ENCODE measurements at regions of chr7 and their contacts with region 1.

Region 1: DNA sequence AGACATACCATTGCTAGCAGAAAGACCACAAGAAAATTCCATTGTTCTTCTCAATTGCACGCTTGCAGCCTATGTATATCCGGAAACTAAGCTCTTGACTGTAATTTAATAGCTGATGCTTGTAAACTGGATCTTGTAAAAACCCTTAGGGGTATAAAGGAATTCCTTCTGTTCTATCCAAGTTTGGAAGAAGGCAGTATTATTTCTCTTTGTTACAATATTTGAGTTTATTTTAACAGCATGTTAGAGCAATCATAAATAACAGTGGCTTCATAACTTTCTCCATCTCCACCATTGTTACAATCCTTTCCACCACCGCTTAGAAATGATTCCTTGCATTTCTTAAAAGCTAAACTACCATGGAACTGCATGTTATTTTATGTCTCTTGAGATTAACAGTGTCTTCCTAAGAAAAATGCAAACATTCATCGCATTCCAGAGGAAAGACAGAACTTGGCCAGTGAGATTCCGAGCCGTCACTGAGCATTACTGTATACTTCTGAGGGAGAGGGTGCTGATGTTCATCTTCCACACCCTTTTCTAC is 92.5 kb downstream of the TRIL start:
- DNase-seq: no peak
- ATAC-seq: no peak
- H3K4me3 ChIP-seq: no peak overlapping the region
- H3K27ac ChIP-seq: no peak overlapping the region
- H3K4me1 ChIP-seq: no peaks in the 10 kb centered on the region
- H3K27me3 ChIP-seq: no peaks in the 10 kb centered on the region
- CTCF ChIP-seq: no peak

Region 2: DNA sequence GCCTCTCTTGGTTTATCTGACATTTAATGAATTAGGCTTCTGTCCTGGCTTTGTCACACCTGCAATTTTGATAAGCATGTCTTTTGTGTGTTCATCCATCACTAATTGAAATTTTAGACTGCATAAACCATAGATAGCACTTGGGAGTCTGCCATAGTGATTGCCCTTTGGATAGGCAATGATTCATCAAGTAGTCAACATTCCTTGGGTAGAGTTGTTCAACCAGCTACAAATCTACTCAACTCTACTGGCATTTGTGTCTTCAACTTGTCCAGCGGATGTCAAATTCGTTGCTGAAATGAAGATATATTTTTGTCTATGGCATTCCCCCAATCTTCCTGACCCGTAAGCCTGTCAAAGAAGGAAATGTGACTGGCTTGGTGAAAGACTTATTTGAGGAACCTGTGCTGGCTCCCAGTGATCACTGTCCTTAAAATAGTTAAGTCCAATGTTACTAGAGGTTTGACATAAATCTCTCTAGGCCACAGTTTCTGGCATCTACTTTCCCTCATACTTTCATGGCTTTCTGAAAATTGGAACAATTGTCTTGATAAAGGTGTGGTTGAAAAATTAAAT is 487.0 kb before region 1 on chr7:
- intact Hi-C with region 1: loop called in 2 of 3 experiments (anchors 10 kb)
- DNase-seq: no peak
- ATAC-seq: no peak
- H3K4me3 ChIP-seq: no peak overlapping the region
- H3K27ac ChIP-seq: no peak overlapping the region
- H3K4me1 ChIP-seq: no peaks in the 10 kb centered on the region
- H3K27me3 ChIP-seq: no peaks in the 10 kb centered on the region
- CTCF ChIP-seq: no peak

Region 3: DNA sequence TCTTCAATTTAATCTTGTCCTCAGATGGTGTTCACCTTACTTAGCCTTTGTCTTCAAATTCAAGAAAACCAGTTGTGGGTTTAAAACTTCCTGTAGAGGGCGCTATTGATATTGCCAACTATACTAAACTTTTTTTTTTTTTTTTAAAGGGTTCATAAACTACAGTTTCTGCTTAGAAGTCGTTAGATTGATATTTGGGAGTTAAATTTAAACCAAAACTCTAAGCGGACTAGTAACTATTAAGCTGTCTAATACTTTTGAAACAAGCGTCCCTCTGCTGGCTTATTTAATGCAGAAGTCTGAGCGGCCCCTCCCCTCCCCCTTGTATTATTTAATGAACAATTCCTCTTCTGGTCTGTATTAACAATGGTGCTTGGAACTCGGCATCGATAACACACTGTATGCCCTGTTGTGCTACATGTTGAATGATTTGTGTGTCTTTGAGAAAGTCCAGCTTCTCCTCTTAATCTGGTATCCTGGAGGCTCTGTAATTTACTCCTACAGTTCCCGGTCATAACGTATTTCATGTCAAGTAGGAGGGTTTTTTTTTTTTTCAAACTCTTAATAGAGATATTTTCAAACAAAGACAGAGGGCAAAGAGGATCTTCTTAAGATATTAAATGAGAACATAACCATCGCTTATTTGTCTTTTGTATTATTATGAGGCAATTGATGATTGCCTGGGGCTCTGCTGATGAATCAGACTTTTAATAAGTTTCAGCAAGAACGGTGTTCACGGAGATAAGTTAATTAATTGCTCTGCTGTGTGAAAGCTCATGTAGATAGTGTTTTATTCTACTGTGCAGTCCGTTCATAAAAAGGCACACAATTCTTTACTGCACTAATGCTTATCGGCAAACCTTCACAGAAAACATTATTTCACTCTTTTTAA is 475.9 kb before region 1 on chr7:
- intact Hi-C with region 1: loop called in 1 of 3 experiments (anchors 10 kb)
- DNase-seq: no peak
- ATAC-seq: peak; percentile 28 to 85 (median 71)
- H3K4me3 ChIP-seq: no peak overlapping the region
- H3K27ac ChIP-seq: no peak overlapping the region
- H3K4me1 ChIP-seq: no peaks in the 10 kb centered on the region
- H3K27me3 ChIP-seq: no peaks in the 10 kb centered on the region
- CTCF ChIP-seq: peak; percentile 56 to 84 (median 62)

Region 4: DNA sequence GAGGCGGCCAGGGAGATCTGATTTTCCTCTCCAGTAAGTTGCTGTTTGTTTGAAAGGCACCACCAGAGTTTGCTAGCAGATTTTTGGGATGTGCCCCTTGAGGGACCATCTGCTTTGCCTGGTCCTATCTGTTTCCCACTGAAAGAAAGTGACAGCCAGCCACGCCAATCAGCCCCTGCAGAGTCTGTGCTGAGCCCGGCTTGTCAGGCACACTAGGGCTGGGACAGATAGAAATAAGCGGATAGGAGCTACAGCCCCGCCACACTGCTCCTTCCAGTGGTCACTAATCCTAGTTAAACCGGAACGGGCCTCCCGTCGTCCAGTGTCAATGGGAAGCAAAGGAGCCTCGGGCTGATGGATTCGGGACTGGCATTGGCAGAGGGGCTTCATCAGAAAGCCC is 536.1 kb after region 1 on chr7:
- intact Hi-C with region 1: no loop called
- DNase-seq: no peak
- ATAC-seq: peak in 1 of 4 donors; percentile 14
- H3K4me3 ChIP-seq: no peak overlapping the region
- H3K27ac ChIP-seq: no peak overlapping the region
- H3K4me1 ChIP-seq: peaks cover 0 to 8% (median 6%) of the 10 kb centered on the region in 3 donors
- H3K27me3 ChIP-seq: no peaks in the 10 kb centered on the region
- CTCF ChIP-seq: no peak